ENCODE measurements at regions of chr14 and their contacts with region 1.

Region 1: GRCh38 chr14:103808403-103809001 is 38.9 kb downstream of the PPP1R13B start:
- DNase-seq: peak; percentile 82
- ATAC-seq: peak; percentile 91
- H3K4me3 Mint-ChIP-seq: no peak overlapping the region
- H3K27ac Mint-ChIP-seq: no peak overlapping the region
- H3K4me1 Mint-ChIP-seq: no peaks in the 10 kb centered on the region
- H3K27me3 Mint-ChIP-seq: no peaks in the 10 kb centered on the region
- CTCF ChIP-seq: peak; percentile 59; the same call in 1 of the 2 replicates

Region 2: GRCh38 chr14:103819503-103820307 is 11.2 kb after region 1 on chr14:
- CTCF ChIA-PET with region 1: interaction called, 27 read pairs
- POLR2A ChIA-PET with region 1: no interaction called
- DNase-seq: peak; percentile 62
- ATAC-seq: peak; percentile 99
- H3K4me3 Mint-ChIP-seq: peak overlapping the region; percentile 37
- H3K27ac Mint-ChIP-seq: peak overlapping the region; percentile 90
- H3K4me1 Mint-ChIP-seq: peaks cover 23% of the 10 kb centered on the region
- H3K27me3 Mint-ChIP-seq: no peaks in the 10 kb centered on the region
- CTCF ChIP-seq: no peak

Region 3: DNA sequence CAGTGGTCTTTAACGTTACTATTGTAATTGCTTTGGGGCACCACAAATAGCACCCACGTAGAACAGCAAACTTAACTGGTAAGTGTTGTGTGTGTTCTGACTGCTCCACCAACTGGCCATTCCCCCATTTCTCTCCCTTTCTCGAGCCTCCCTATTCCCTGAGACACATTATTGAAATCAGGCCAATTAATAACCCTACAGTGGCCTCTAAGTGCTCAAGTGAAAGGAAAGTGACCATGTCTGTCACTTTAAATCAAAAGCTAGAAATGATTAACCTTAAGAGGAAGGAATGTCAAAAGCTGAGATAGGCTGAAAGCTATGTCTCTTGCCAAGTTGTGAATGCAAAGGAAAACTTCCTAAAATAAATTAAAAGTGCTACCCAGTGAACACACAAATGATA is 16.6 kb after region 1 on chr14:
- CTCF ChIA-PET with region 1: interaction called, 27 read pairs
- POLR2A ChIA-PET with region 1: no interaction called
- DNase-seq: no peak
- ATAC-seq: no peak
- H3K4me3 Mint-ChIP-seq: no peak overlapping the region
- H3K27ac Mint-ChIP-seq: no peak overlapping the region
- H3K4me1 Mint-ChIP-seq: peaks cover 11% of the 10 kb centered on the region
- H3K27me3 Mint-ChIP-seq: no peaks in the 10 kb centered on the region; the same call in 1 of the 2 replicates
- CTCF ChIP-seq: no peak

Region 4: DNA sequence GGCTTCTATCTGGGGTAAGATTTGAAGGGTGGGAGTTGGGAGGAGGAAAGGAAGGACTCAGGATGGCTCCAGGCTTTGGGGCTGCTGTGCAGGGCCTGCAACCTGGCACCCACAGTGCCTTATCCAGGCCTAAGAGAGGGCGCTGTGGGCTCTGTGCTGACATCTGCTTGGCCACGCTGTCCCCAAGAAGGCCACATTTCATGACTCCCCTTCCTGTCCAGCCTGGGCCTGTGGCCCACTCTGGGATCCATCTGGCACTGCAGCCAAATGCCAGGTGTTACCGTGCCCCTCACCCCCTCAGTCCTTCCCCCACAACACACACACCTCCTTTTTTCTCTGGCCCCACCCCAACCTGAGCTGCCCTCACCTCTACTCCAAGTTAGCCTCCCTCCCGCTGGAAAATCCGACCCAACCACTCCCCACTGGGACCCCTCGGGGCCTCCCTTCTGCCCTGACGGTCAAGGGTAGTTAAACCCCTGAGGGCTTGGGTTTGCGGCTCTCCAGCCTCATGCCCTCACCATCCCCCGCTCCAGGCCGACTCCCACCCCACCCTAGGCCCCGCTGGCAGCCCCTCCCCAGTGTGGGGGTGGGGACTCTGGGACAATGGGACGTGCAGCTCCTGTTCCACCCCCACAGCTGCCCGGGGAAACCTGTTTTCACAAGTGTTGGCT is 46.7 kb after region 1 on chr14:
- CTCF ChIA-PET with region 1: interaction called, 29 read pairs
- POLR2A ChIA-PET with region 1: no interaction called
- DNase-seq: peak; percentile 75
- ATAC-seq: peak; percentile 79
- H3K4me3 Mint-ChIP-seq: peak overlapping the region; percentile 35
- H3K27ac Mint-ChIP-seq: peak overlapping the region; percentile 86; the same call in 1 of the 2 replicates
- H3K4me1 Mint-ChIP-seq: peaks cover 43% of the 10 kb centered on the region
- H3K27me3 Mint-ChIP-seq: no peaks in the 10 kb centered on the region; the same call in 1 of the 2 replicates
- CTCF ChIP-seq: no peak

Region 5: GRCh38 chr14:103880348-103881267 is 72.1 kb after region 1 on chr14:
- CTCF ChIA-PET with region 1: interaction called, 22 read pairs
- POLR2A ChIA-PET with region 1: no interaction called
- DNase-seq: no peak
- ATAC-seq: no peak
- H3K4me3 Mint-ChIP-seq: no peak overlapping the region
- H3K27ac Mint-ChIP-seq: no peak overlapping the region
- H3K4me1 Mint-ChIP-seq: peaks cover 20% of the 10 kb centered on the region
- H3K27me3 Mint-ChIP-seq: no peaks in the 10 kb centered on the region
- CTCF ChIP-seq: no peak

Region 6: GRCh38 chr14:103910262-103910935 is 101.9 kb after region 1 on chr14:
- CTCF ChIA-PET with region 1: interaction called, 34 read pairs
- POLR2A ChIA-PET with region 1: interaction called, 3 read pairs
- DNase-seq: peak; percentile 88
- ATAC-seq: peak; percentile 96
- H3K4me3 Mint-ChIP-seq: peak overlapping the region; percentile 53
- H3K27ac Mint-ChIP-seq: peak overlapping the region; percentile 5
- H3K4me1 Mint-ChIP-seq: peaks cover 14% of the 10 kb centered on the region
- H3K27me3 Mint-ChIP-seq: no peaks in the 10 kb centered on the region
- CTCF ChIP-seq: peak; percentile 44

Region 7: DNA sequence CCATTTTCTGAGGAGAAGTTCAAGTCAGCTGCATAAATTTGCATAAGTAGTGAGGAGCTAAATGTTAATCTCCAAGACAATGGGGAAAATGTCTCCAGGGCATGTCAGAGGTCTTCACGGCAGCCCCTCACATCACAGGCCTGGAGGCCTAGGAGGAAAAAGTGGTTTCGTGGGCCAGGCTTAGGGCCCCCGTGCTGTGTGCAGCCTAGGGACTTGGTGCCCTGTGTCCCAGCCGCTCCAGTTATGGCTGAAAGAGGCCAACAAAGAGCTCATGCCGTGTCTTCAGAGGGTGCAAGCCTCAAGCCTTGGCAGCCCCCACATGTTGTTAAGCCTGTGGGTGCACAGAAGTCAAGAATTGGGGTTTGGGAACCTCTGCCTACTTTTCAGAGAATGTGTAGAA is 175.7 kb after region 1 on chr14:
- CTCF ChIA-PET with region 1: interaction called, 24 read pairs
- POLR2A ChIA-PET with region 1: no interaction called
- DNase-seq: no peak
- ATAC-seq: no peak
- H3K4me3 Mint-ChIP-seq: no peak overlapping the region
- H3K27ac Mint-ChIP-seq: no peak overlapping the region
- H3K4me1 Mint-ChIP-seq: no peaks in the 10 kb centered on the region
- H3K27me3 Mint-ChIP-seq: peaks cover 20% of the 10 kb centered on the region
- CTCF ChIP-seq: no peak

Measured in WTC11 (cell line).